ENCODE measurements at regions of chr5 and their contacts with region 1.

Region 1: GRCh38 chr5:39283231-39283818 is 64.0 kb upstream of the FYB1 start:
- DNase-seq: peak; percentile 75
- H3K4me3 Mint-ChIP-seq: no peak overlapping the region
- H3K27ac Mint-ChIP-seq: peak overlapping the region; percentile 69
- H3K4me1 Mint-ChIP-seq: peaks cover 47% of the 10 kb centered on the region
- H3K27me3 Mint-ChIP-seq: no peaks in the 10 kb centered on the region

Region 2: DNA sequence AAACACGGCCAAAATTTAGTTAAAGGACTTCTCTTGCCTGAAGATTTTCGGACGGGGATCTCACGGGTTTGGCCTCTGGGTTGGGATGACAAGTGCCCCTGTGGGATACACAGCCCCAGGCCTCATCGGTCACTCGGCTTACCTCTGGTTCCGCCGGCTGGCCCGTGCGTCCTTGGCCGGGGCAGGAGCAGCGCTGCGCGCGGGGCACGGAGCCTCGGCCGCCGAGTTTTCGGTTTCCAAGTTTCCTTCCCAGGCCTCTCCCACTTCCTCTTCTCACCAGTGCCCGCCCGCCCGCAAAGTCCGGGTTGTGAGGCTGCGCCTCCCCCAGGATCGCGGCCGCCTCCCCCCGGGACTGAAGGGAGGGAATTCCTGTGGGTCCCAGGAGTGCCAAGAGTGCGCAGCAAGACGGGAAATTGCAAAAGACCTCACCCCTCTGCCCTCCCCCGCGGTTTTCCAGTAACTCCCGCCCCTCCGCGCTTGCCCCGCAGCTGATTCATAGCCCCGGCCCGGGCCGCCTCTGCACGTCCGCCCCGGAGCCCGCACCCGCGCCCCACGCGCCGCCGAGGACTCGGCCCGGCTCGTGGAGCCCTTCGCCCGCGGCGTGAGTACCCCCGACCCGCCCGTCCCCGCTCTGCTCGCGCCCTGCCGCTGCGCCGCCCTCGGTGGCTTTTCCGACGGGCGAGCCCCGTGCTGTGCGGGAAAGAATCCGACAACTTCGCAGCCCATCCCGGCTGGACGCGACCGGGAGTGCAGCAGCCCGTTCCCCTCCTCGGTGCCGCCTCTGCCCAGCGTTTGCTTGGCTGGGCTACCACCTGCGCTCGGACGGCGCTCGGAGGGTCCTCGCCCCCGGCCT is 437.6 kb before region 1 on chr5 and contains the start of gene OSMR:
- CTCF ChIA-PET with region 1: no interaction called
- intact Hi-C with region 1: loop called (anchors 10 kb)
- DNase-seq: peak; percentile 55
- H3K4me3 Mint-ChIP-seq: peak within 1 kb of the TSS; percentile 77
- H3K27ac Mint-ChIP-seq: no peak within 1 kb of the TSS
- H3K4me1 Mint-ChIP-seq: peaks cover 5% of the 10 kb centered on the region
- H3K27me3 Mint-ChIP-seq: peaks cover 54% of the 10 kb centered on the region
- total RNA-seq, gene OSMR: 0.17 to 0.43 TPM

Region 3: DNA sequence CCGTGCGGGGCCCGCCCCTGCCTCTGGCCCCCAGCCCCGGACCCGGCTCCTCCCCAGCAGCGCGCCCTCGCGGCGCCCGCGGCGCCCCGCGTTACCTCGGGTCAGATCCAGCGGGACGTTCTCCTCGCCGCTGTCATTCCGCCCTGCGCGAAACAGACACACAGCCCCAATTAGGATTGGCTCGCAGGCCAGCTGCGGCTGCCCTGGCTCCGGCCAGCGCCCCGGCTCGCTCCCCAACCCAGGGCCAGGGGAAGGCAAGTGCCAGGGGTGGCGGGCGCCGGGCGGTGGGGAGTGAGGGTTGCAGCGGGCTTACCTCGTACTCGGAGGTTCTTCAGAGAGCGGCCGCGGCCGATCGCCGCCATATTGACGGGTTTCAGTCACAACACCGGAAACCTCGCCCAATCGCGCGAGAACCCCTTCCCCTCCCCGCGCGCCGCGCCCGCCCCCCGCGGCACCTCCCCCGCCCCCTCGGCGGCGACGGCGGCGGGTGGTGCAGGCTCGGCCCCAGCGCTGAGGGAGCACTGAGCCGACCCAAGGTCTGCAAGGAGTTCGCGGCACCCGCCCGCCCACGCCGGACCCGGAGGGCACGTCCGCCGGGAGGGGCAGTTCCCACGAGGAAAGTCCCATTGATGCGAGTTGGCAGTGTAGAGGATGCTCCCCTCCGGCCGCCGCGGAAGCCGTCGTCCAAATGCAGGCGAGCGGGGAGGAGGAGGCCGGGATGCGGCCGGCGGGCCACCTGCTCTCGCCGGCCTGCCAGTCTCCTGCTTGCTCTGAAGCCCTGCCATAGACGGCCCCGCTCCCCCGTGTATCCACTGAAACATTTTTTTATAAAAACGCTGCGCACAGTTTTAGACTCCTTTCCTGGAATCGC is 209.1 kb before region 1 on chr5 and contains the start of gene RICTOR:
- CTCF ChIA-PET with region 1: no interaction called
- intact Hi-C with region 1: loop called (anchors 2 kb)
- DNase-seq: peak; percentile 92
- H3K4me3 Mint-ChIP-seq: peak within 1 kb of the TSS; percentile 95
- H3K27ac Mint-ChIP-seq: peak within 1 kb of the TSS; percentile 92
- H3K4me1 Mint-ChIP-seq: peaks cover 31% of the 10 kb centered on the region
- H3K27me3 Mint-ChIP-seq: peaks cover 23% of the 10 kb centered on the region
- total RNA-seq, gene RICTOR: 25.0 to 26.1 TPM

Region 4: GRCh38 chr5:39158127-39158593 is 125.2 kb before region 1 on chr5:
- CTCF ChIA-PET with region 1: interaction called, 14 read pairs
- intact Hi-C with region 1: no loop called
- DNase-seq: no peak
- H3K4me3 Mint-ChIP-seq: peak overlapping the region; percentile 22
- H3K27ac Mint-ChIP-seq: peak overlapping the region; percentile 70
- H3K4me1 Mint-ChIP-seq: peaks cover 84% of the 10 kb centered on the region
- H3K27me3 Mint-ChIP-seq: no peaks in the 10 kb centered on the region

Region 5: DNA sequence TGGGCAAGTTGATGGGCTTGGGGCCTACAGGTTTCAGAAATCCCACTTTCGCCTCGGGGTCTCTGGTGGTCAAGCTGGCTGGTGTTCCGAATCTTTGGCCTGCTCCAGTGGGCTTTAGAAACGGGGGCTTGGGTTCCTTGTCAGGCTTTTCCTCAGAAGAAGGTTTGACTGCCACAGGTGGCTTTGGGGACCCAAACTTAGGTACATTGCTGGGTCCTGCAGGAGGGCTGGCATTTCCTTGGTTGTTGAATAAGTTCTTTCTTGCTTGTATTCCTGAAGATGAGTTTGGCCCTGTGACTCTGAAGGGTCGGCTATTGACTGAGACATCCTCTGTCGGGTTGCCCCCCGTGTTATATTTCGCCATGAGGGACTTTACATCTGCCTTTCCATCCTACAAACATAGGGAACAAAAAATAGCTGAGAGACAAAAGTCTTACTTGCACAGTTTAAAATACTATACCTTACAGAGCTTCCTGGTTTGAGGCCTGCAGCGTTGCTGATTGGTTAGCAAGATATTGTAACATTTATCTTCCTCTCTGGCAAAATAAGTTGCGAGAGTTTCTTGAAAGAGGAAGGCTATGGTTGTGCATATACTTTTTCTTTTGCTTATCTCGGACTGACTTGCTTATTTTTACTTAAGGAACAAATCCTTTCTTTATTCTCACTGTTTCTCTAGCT is 80.6 kb before region 1 on chr5:
- CTCF ChIA-PET with region 1: interaction called, 24 read pairs
- intact Hi-C with region 1: no loop called
- DNase-seq: peak; percentile 55
- H3K4me3 Mint-ChIP-seq: peak overlapping the region; percentile 83
- H3K27ac Mint-ChIP-seq: peak overlapping the region; percentile 99
- H3K4me1 Mint-ChIP-seq: peaks cover 37% of the 10 kb centered on the region
- H3K27me3 Mint-ChIP-seq: no peaks in the 10 kb centered on the region

Region 6: GRCh38 chr5:39231705-39232525 is 51.4 kb before region 1 on chr5:
- CTCF ChIA-PET with region 1: interaction called, 317 read pairs
- intact Hi-C with region 1: loop called (anchors 1 kb)
- DNase-seq: peak; percentile 72
- H3K4me3 Mint-ChIP-seq: peak overlapping the region; percentile 52
- H3K27ac Mint-ChIP-seq: peak overlapping the region; percentile 90
- H3K4me1 Mint-ChIP-seq: peaks cover 14% of the 10 kb centered on the region
- H3K27me3 Mint-ChIP-seq: no peaks in the 10 kb centered on the region

Region 7: GRCh38 chr5:39314591-39314990 is 31.3 kb after region 1 on chr5:
- CTCF ChIA-PET with region 1: no interaction called
- intact Hi-C with region 1: no loop called
- DNase-seq: no peak
- H3K4me3 Mint-ChIP-seq: no peak overlapping the region
- H3K27ac Mint-ChIP-seq: no peak overlapping the region
- H3K4me1 Mint-ChIP-seq: no peaks in the 10 kb centered on the region
- H3K27me3 Mint-ChIP-seq: no peaks in the 10 kb centered on the region

Measured in activated naive CD4-positive, alpha-beta T cell treated with anti-CD3 and anti-CD28 coated beads for 36 hours (primary cell).